ENCODE measurements at regions of chr4 and their contacts with region 1.

Region 1: GRCh38 chr4:78379991-78380729 is 171.4 kb upstream of the ANXA3 start:
- DNase-seq: no peak
- ATAC-seq: no peak
- H3K4me3 ChIP-seq: no peak overlapping the region
- H3K27ac ChIP-seq: no peak overlapping the region
- H3K4me1 ChIP-seq: peaks cover 24% of the 10 kb centered on the region
- H3K27me3 ChIP-seq: no peaks in the 10 kb centered on the region
- CTCF ChIP-seq: no peak

Region 2: DNA sequence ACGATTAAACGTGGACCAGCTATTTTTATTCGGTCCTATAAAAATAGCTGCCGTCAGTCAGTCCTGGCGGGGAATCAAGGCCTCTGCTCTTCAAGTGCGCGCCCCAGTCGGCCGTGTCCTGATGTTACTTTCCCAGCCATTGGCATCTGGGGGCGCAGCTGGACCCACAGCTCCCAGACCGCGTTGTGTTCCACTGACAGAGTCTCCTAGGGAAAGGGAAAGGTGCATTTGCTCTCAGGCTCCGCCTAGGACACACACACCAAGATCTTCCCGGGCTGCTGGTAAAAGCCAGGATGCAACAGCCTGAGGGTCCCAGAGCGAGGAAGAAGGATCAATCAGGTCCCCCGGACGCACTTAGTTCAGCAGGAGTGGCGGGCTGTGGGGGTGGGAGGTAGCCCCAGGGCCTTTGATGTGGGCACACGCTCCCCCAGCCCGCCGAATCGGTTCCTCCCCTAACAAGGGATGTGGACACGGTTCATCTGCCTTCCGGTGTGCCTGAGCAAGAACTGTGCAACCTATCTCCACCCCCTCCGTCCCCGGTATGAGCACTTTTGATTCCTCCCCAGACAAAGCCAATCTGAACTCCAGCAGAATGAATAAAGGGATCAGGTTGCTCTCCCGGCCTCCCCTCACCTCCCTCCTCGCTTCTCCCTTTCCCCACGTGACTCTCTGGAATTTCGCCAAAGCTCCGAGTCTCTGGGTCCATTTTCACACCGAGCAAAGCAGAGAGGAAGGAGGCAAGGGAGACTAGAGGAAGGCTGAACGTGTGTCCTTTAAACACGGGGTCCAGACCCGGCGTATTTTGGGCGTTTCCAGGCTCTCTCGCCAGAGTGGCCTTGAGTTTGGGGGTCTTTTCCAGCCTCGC is 323.7 kb before region 1 on chr4:
- intact Hi-C with region 1: loop called in 1 of 2 experiments (anchors 5 kb)
- DNase-seq: peak; percentile 46 to 86
- ATAC-seq: peak; percentile 70 to 82 (median 76)
- H3K4me3 ChIP-seq: peak overlapping the region; percentile 84
- H3K27ac ChIP-seq: peak overlapping the region; percentile 83
- H3K4me1 ChIP-seq: peaks cover 4% of the 10 kb centered on the region
- H3K27me3 ChIP-seq: no peaks in the 10 kb centered on the region
- CTCF ChIP-seq: no peak